K562 (cell line): ENCODE measurements at regions of chr14 and their contacts with region 1.

Region 1: DNA sequence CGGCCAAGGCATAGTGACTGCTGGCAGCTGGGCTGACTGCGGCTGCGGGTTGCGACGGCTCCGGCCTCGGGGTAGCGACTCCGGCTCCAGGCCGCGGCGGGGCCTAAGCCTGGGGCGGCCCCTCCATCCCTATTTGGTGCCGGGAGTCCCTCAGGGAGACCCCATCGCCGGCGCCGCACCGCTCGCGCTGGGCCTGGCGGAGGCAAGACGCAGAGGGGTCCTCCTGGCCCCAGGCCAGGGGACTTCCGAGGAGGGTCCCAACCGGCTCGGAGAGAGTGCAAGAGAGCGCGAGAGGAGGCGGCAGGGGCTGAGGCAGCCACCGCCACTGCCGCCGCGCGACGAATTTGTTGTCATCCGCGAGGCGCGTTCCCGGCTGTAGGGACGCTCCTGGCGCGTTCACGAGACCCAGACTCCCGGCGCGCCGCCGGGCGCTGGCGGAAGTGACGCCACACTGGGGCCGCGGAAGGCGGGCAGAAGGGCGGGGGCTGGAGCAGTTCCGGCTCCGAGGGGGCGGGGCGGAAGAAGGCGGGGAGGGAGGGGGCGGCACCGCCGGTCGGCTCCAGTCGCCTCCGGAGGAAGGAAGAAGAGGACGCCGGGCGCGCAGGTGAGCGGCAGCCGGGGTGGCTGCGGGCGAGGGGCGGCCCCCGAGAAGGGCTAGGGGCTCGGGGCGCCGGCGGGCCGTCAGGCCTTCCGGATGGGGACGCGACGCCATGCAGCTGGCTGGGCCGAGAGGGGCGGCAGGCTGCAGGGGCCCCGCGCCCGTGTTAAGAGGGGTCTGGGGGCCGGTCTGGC is at the starts of genes ATG2B and GSKIP:
- DNase-seq: peak; percentile 87 to 93 (median 90)
- ATAC-seq: peak; percentile 75
- H3K4me3 ChIP-seq: peak within 1 kb of the TSS; percentile 92
- H3K27ac ChIP-seq: peak within 1 kb of the TSS; percentile 78
- H3K4me1 ChIP-seq: peaks cover 15 to 31% of the 10 kb centered on the region in 2 experiments
- H3K27me3 ChIP-seq: no peaks in the 10 kb centered on the region
- CTCF ChIP-seq: no peak
- EP300 ChIP-seq: no peak
- POLR2A ChIP-seq: peak; percentile 65
- RAD21 ChIP-seq: no peak
- polyA plus RNA-seq, gene ATG2B: 0.83 to 1.6 TPM
- polyA plus RNA-seq, gene GSKIP: 47.6 to 58.9 TPM

Region 2: DNA sequence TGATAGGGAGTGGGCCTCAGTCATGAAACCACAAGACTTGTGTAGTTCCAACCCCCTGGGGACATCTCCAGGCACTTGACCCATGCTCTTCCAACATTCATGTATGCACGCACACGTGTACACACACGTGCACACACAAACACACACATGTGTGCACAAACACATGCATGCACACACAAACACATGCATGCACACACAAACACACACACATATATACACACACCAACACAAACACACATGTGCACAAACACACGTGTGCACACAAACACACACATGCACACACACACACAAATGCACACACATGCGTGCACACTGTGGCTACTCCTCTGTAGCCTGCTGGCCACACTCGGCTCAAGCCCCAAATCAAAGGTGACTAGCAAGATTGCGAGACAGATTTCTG is 135.7 kb before region 1 on chr14:
- CTCF ChIA-PET with region 1: no interaction called
- POLR2A ChIA-PET with region 1: no interaction called
- in situ Hi-C with region 1: no loop called
- intact Hi-C with region 1: no loop called
- DNase-seq: no peak
- ATAC-seq: no peak
- H3K4me3 ChIP-seq: no peak overlapping the region
- H3K27ac ChIP-seq: no peak overlapping the region
- H3K4me1 ChIP-seq: no peaks in the 10 kb centered on the region
- H3K27me3 ChIP-seq: peaks cover 4 to 22% of the 10 kb centered on the region in 2 experiments; a peak in 4 of 5 replicates
- CTCF ChIP-seq: no peak
- EP300 ChIP-seq: no peak
- POLR2A ChIP-seq: no peak
- RAD21 ChIP-seq: no peak

Region 3: GRCh38 chr14:96409701-96410100 is 46.5 kb after region 1 on chr14:
- CTCF ChIA-PET with region 1: no interaction called
- POLR2A ChIA-PET with region 1: no interaction called
- in situ Hi-C with region 1: no loop called
- intact Hi-C with region 1: loop called (anchors 5 kb)
- DNase-seq: no peak
- ATAC-seq: no peak
- H3K4me3 ChIP-seq: no peak overlapping the region
- H3K27ac ChIP-seq: no peak overlapping the region
- H3K4me1 ChIP-seq: peaks cover 12 to 13% of the 10 kb centered on the region in 2 experiments; a peak in 3 of 5 replicates
- H3K27me3 ChIP-seq: peaks cover 0 to 6% of the 10 kb centered on the region in 2 experiments; a peak in 2 of 5 replicates
- CTCF ChIP-seq: no peak
- EP300 ChIP-seq: no peak
- POLR2A ChIP-seq: no peak
- RAD21 ChIP-seq: no peak